ENCODE measurements at regions of chr4 and their contacts with region 1.

Region 1: GRCh38 chr4:25842229-25842845 is 20.5 kb downstream of the SEL1L3 start:
- DNase-seq: peak; percentile 21 to 68 (median 40)
- ATAC-seq: peak; percentile 79
- H3K4me3 ChIP-seq: no peak overlapping the region
- H3K4me3 Mint-ChIP-seq: no peak overlapping the region
- H3K27ac ChIP-seq: no peak overlapping the region
- H3K27ac Mint-ChIP-seq: no peak overlapping the region
- H3K4me1 ChIP-seq: peaks cover 25% of the 10 kb centered on the region
- H3K4me1 Mint-ChIP-seq: peaks cover 40% of the 10 kb centered on the region
- H3K27me3 ChIP-seq: no peaks in the 10 kb centered on the region
- H3K27me3 Mint-ChIP-seq: no peaks in the 10 kb centered on the region
- CTCF ChIP-seq: peak; percentile 49

Region 2: DNA sequence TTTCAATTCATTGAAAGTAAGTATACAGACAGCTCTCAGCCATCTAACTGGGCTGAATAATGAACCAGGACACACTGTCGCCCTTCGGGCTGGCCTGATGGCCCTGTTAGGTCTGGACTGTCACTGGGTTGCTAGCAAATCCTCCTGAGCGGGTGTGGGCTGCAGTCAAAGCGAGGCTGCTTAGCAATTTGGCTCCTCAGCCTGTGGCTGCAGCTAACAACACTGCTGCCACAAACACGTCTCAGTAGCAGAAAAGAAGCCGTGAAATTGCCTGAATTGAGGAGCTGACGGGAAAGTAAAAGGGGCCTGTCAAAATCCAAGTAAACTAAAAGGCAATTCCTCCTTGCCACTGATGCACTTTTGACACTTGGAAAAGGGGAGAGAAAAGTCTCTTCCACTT is 144.5 kb after region 1 on chr4:
- CTCF ChIA-PET with region 1: no interaction called
- POLR2A ChIA-PET with region 1: no interaction called
- intact Hi-C with region 1: loop called in 1 of 2 experiments (anchors 5 kb)
- DNase-seq: no peak
- ATAC-seq: no peak
- H3K4me3 ChIP-seq: no peak overlapping the region
- H3K4me3 Mint-ChIP-seq: no peak overlapping the region
- H3K27ac ChIP-seq: no peak overlapping the region
- H3K27ac Mint-ChIP-seq: no peak overlapping the region
- H3K4me1 ChIP-seq: peaks cover 6% of the 10 kb centered on the region
- H3K4me1 Mint-ChIP-seq: peaks cover 8% of the 10 kb centered on the region
- H3K27me3 ChIP-seq: no peaks in the 10 kb centered on the region
- H3K27me3 Mint-ChIP-seq: no peaks in the 10 kb centered on the region
- CTCF ChIP-seq: no peak

Region 3: DNA sequence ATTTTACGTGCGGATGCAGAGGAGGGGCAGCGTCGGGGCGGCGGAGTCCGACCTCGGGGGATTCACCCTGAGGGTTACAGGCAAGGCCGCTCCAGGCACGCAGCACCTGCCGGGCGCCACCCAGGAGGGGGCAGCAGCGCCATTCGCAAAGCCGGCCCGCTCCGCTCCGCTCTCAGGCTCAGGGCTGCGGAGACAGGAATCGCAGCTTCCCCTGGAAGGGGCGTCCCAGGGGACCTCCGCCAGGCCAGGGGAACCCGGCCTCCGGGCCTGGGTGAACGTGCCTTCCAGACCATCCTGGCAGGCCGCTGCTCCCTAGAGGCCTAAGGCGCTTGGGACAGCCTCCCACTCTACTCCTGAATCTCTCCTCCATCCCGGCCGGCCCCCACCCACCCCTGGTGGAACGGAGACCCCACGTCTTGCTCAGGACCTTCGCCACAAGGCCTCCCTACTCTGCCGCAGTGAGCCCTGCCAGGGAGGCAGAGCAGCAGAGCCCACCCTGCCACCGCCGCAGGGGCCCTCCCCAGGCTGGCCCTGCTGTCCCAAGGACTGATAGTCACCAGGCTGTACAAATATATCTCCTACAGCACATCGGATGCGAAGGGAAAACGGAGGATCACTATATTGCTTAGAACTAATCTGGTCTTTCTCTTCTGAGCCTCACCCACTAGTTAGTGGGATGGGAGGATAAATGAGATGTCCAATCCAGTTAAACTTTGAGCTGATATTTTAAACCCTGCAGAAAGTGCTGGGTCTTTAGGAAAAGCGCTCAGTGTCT is 186.6 kb after region 1 on chr4:
- CTCF ChIA-PET with region 1: no interaction called
- POLR2A ChIA-PET with region 1: no interaction called
- intact Hi-C with region 1: loop called in 1 of 2 experiments (anchors 5 kb)
- DNase-seq: peak; percentile 22 to 73 (median 49)
- ATAC-seq: peak; percentile 63
- H3K4me3 ChIP-seq: no peak overlapping the region
- H3K4me3 Mint-ChIP-seq: no peak overlapping the region
- H3K27ac ChIP-seq: no peak overlapping the region
- H3K27ac Mint-ChIP-seq: no peak overlapping the region
- H3K4me1 ChIP-seq: peaks cover 6% of the 10 kb centered on the region
- H3K4me1 Mint-ChIP-seq: no peaks in the 10 kb centered on the region
- H3K27me3 ChIP-seq: peaks cover 6 to 7% of the 10 kb centered on the region in 2 experiments
- H3K27me3 Mint-ChIP-seq: peaks cover 25% of the 10 kb centered on the region
- CTCF ChIP-seq: peak; percentile 52

Region 4: GRCh38 chr4:26081795-26082498 is 239.6 kb after region 1 on chr4:
- CTCF ChIA-PET with region 1: no interaction called
- POLR2A ChIA-PET with region 1: no interaction called
- intact Hi-C with region 1: loop called in 1 of 2 experiments (anchors 10 kb)
- DNase-seq: peak in 3 of 14 experiments; percentile 63 to 70 (median 69)
- ATAC-seq: no peak
- H3K4me3 ChIP-seq: no peak overlapping the region
- H3K4me3 Mint-ChIP-seq: no peak overlapping the region
- H3K27ac ChIP-seq: no peak overlapping the region
- H3K27ac Mint-ChIP-seq: no peak overlapping the region
- H3K4me1 ChIP-seq: peaks cover 14% of the 10 kb centered on the region
- H3K4me1 Mint-ChIP-seq: peaks cover 19% of the 10 kb centered on the region
- H3K27me3 ChIP-seq: no peaks in the 10 kb centered on the region
- H3K27me3 Mint-ChIP-seq: peaks cover 7% of the 10 kb centered on the region
- CTCF ChIP-seq: peak; percentile 79

Region 5: DNA sequence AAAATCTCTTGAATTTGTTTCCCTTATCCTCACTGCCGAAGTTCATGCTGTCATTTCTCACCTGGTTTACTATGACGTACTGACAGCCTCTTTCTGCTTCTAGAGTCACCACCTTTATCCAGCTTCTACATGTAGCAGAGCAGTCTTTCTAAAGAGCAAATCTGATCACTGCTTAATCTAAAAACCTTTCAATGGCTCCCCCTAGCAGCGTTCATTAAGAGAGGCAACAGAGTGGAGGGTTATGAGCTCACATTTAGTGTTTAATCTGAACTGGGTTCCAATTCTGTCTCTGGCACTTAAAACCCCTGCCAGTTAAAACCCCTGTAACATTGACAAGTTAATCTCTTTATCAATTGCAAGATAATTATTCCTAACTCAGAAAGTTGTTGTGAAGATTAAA is 482.9 kb after region 1 on chr4:
- CTCF ChIA-PET with region 1: interaction called, 4 read pairs
- POLR2A ChIA-PET with region 1: no interaction called
- intact Hi-C with region 1: loop called in 1 of 2 experiments (anchors 5 kb)
- DNase-seq: peak in 6 of 14 experiments; percentile 10 to 79 (median 51)
- ATAC-seq: peak; percentile 34
- H3K4me3 ChIP-seq: no peak overlapping the region
- H3K4me3 Mint-ChIP-seq: peak overlapping the region; percentile 73
- H3K27ac ChIP-seq: no peak overlapping the region
- H3K27ac Mint-ChIP-seq: peak overlapping the region; percentile 40
- H3K4me1 ChIP-seq: peaks cover 24% of the 10 kb centered on the region
- H3K4me1 Mint-ChIP-seq: peaks cover 54% of the 10 kb centered on the region
- H3K27me3 ChIP-seq: no peaks in the 10 kb centered on the region
- H3K27me3 Mint-ChIP-seq: no peaks in the 10 kb centered on the region
- CTCF ChIP-seq: peak; percentile 61

Region 6: GRCh38 chr4:26404743-26405206 is 562.4 kb after region 1 on chr4:
- CTCF ChIA-PET with region 1: no interaction called
- POLR2A ChIA-PET with region 1: no interaction called
- intact Hi-C with region 1: loop called in 1 of 2 experiments (anchors 5 kb)
- DNase-seq: no peak
- ATAC-seq: no peak
- H3K4me3 ChIP-seq: no peak overlapping the region
- H3K4me3 Mint-ChIP-seq: no peak overlapping the region
- H3K27ac ChIP-seq: no peak overlapping the region
- H3K27ac Mint-ChIP-seq: no peak overlapping the region
- H3K4me1 ChIP-seq: no peaks in the 10 kb centered on the region
- H3K4me1 Mint-ChIP-seq: peaks cover 5% of the 10 kb centered on the region
- H3K27me3 ChIP-seq: no peaks in the 10 kb centered on the region
- H3K27me3 Mint-ChIP-seq: no peaks in the 10 kb centered on the region
- CTCF ChIP-seq: no peak

Region 7: DNA sequence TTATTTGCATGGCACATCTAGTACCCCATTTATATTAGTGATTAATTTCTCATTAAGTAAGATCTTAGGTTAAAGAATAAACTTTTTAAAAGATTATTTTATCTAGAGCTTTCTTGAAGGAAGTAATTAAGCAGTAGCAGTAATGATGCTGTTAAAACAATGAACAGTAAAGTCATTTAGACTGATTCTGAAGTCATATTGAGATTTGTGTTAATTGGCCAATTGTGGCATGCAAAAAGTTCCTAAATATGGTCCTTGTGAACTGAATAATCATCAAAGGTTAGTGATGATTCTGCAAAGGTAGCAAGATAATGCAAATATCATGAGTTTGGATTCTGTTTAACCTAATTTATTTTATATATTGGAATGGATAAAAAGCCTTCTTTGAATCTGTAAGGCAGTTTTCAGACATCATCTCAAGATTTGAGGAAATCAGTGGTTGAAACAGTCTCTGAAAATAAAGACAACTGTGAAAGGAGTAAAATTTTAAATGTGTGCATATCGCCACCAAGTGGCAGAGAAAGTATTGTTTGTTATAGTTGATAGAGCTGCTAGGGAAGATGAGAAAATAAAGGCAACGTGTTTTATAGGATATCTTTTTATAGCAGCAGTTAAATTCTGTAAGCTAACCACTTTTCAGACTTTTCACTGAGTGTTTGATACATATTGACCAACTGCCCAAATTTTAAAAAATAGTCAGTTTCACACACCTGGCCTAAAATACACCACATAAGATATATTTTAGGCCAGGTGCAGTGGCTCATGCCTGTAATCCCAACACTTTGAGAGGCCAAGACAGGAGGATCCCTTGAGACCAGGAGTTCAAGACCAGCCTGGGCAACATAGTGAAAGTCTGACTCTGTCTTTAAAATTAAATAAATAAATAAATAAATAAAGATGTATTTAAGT is 568.3 kb after region 1 on chr4:
- CTCF ChIA-PET with region 1: no interaction called
- POLR2A ChIA-PET with region 1: no interaction called
- intact Hi-C with region 1: loop called (anchors 1 to 5 kb)
- DNase-seq: peak in 6 of 14 experiments; percentile 8 to 72 (median 62)
- ATAC-seq: peak; percentile 62
- H3K4me3 ChIP-seq: no peak overlapping the region
- H3K4me3 Mint-ChIP-seq: no peak overlapping the region
- H3K27ac ChIP-seq: no peak overlapping the region
- H3K27ac Mint-ChIP-seq: no peak overlapping the region
- H3K4me1 ChIP-seq: no peaks in the 10 kb centered on the region
- H3K4me1 Mint-ChIP-seq: no peaks in the 10 kb centered on the region
- H3K27me3 ChIP-seq: no peaks in the 10 kb centered on the region
- H3K27me3 Mint-ChIP-seq: no peaks in the 10 kb centered on the region
- CTCF ChIP-seq: peak; percentile 79